ENCODE measurements at regions of chr15 and their contacts with region 1.

Region 1: GRCh38 chr15:39100106-39100660 is 480.7 kb upstream of the THBS1 start:
- DNase-seq: no peak
- ATAC-seq: no peak
- H3K4me3 Mint-ChIP-seq: no peak overlapping the region
- H3K27ac Mint-ChIP-seq: no peak overlapping the region
- H3K4me1 Mint-ChIP-seq: no peaks in the 10 kb centered on the region
- H3K27me3 Mint-ChIP-seq: peaks cover 4% of the 10 kb centered on the region

Region 2: GRCh38 chr15:39171944-39172368 is 71.8 kb after region 1 on chr15:
- CTCF ChIA-PET with region 1: interaction called, 3 read pairs
- POLR2A ChIA-PET with region 1: no interaction called
- intact Hi-C with region 1: loop called in 1 of 2 experiments (anchors 10 kb)
- DNase-seq: peak; percentile 60
- ATAC-seq: peak; percentile 63
- H3K4me3 Mint-ChIP-seq: no peak overlapping the region
- H3K27ac Mint-ChIP-seq: no peak overlapping the region
- H3K4me1 Mint-ChIP-seq: no peaks in the 10 kb centered on the region
- H3K27me3 Mint-ChIP-seq: peaks cover 21% of the 10 kb centered on the region

Measured in activated CD4-positive, alpha-beta T cell treated with anti-CD3 and anti-CD28 coated beads for 36 hours (primary cell).